Motor neuron (in vitro differentiated cells): ENCODE measurements at regions of chr18 and their contacts with region 1.

Region 1: GRCh38 chr18:36095936-36096519 is 28.7 kb upstream of the RPRD1A start:
- ATAC-seq: peak in 3 of 8 experiments; percentile 47 to 50 (median 49)
- H3K4me3 ChIP-seq: no peak overlapping the region
- H3K27ac ChIP-seq: no peak overlapping the region
- H3K4me1 ChIP-seq: no peaks in the 10 kb centered on the region

Region 2: GRCh38 chr18:36284671-36285295 is 188.8 kb after region 1 on chr18:
- in situ Hi-C with region 1: loop called in 2 of 9 experiments (anchors 10 to 25 kb)
- ATAC-seq: peak in 6 of 8 experiments; percentile 21 to 75 (median 35)
- H3K4me3 ChIP-seq: no peak overlapping the region
- H3K27ac ChIP-seq: no peak overlapping the region
- H3K4me1 ChIP-seq: no peaks in the 10 kb centered on the region

Region 3: GRCh38 chr18:36296650-36297416 is 200.8 kb after region 1 on chr18:
- in situ Hi-C with region 1: loop called in 1 of 9 experiments (anchors 25 kb)
- ATAC-seq: peak; percentile 51 to 72 (median 61)
- H3K4me3 ChIP-seq: peak overlapping the region; percentile 60 to 98 (median 79)
- H3K27ac ChIP-seq: peak overlapping the region; percentile 78 to 89
- H3K4me1 ChIP-seq: peaks cover 5 to 13% of the 10 kb centered on the region in 2 donors